Activated CD4-positive, alpha-beta memory T cell treated with anti-CD3 and anti-CD28 coated beads, Interleukin-2, amount 10 ng/mL, durations not matched to agents 7 days and 5 days (primary cell): ENCODE measurements at regions of chrX and their contacts with region 1.

Region 1: DNA sequence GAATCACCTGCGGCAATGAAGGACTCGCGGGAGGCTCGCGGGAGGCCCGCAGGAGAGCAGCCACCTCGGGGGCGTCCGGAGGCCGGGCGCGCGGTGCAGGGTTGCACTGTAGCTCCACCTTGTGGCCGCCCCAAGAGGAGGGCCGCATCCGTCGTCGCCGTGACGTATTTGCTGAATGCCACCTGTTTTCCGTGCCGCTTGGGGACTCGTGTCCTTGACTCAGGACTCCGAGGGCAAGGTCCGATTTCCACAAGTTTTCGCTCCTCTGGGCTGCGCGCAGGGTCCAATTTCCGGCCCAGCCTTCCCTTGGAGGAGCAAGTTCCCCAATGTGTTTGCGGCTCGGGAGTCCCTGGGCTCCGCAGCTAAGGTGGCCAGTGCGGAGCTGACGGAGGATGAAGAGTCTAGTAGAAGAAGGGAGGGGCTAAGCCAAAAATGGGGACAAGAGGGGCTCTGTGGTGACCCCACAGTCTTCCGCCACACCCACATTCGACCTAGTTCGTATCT is 10.7 kb upstream of the DLG3 start:
- DNase-seq: peak; percentile 79
- H3K4me3 Mint-ChIP-seq: peak overlapping the region; percentile 85
- H3K27ac Mint-ChIP-seq: peak overlapping the region; percentile 81
- H3K4me1 Mint-ChIP-seq: peaks cover 38% of the 10 kb centered on the region
- H3K27me3 Mint-ChIP-seq: peaks cover 15% of the 10 kb centered on the region

Region 2: GRCh38 chrX:70289793-70290776 is 143.8 kb before region 1 on chrX and contains the starts of genes KIF4A and PDZD11:
- CTCF ChIA-PET with region 1: interaction called, 11 read pairs
- POLR2A ChIA-PET with region 1: interaction called, 3 read pairs
- DNase-seq: peak; percentile 88
- H3K4me3 Mint-ChIP-seq: peak within 1 kb of the TSS; percentile 89
- H3K27ac Mint-ChIP-seq: peak within 1 kb of the TSS; percentile 85
- H3K4me1 Mint-ChIP-seq: peaks cover 33% of the 10 kb centered on the region
- H3K27me3 Mint-ChIP-seq: no peaks in the 10 kb centered on the region
- total RNA-seq, gene KIF4A: 33.3 to 34.0 TPM
- total RNA-seq, gene PDZD11: 36.3 to 38.8 TPM

Region 3: DNA sequence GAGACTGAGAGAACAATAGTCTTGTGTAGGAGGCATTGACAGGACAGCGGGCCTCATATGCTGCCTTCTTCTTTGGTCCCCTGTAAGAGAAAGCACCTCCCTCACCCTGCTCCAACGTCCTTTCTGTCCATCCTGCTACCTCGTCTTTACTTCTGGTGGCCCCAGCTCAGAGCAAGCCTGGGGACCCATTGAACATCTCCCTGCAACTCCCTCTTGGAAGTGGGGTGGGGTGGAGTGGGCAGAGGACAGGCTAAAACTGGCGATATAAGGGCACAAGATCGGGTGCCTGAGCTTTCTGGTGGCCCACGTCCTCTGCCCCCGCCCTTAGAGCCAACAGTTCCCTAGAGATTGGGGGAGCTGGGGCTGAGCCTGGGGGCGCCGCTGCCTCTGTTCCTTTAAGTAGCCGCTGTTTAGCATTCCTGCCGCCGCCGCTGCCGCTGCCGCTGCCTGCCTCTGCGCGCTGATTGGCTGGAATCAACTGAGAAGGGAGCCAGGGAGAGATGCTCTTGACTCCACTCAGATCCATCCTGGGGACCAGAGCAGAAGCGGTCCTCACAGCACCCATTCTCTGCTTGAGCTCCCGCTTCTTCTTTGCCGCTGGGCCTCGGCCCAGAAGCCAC is 10.5 kb after region 1 on chrX and contains the start of gene DLG3:
- CTCF ChIA-PET with region 1: interaction called, 9 read pairs
- POLR2A ChIA-PET with region 1: interaction called, 10 read pairs
- DNase-seq: no peak
- H3K4me3 Mint-ChIP-seq: peak within 1 kb of the TSS; percentile 49
- H3K27ac Mint-ChIP-seq: no peak within 1 kb of the TSS
- H3K4me1 Mint-ChIP-seq: peaks cover 6% of the 10 kb centered on the region
- H3K27me3 Mint-ChIP-seq: peaks cover 41% of the 10 kb centered on the region
- total RNA-seq, gene DLG3: 33.3 to 39.9 TPM

Region 4: GRCh38 chrX:70452143-70452733 is 18.3 kb after region 1 on chrX:
- CTCF ChIA-PET with region 1: interaction called, 10 read pairs
- POLR2A ChIA-PET with region 1: interaction called, 13 read pairs
- DNase-seq: peak; percentile 69
- H3K4me3 Mint-ChIP-seq: peak overlapping the region; percentile 90
- H3K27ac Mint-ChIP-seq: peak overlapping the region; percentile 88
- H3K4me1 Mint-ChIP-seq: peaks cover 45% of the 10 kb centered on the region
- H3K27me3 Mint-ChIP-seq: no peaks in the 10 kb centered on the region